ENCODE measurements at regions of chr6 and their contacts with region 1.

Region 1: GRCh38 chr6:122730775-122731386 is 48.6 kb upstream of the FABP7 start:
- DNase-seq: peak in 3 of 14 experiments; percentile 20 to 38 (median 30)
- ATAC-seq: no peak
- H3K4me3 ChIP-seq: no peak overlapping the region
- H3K4me3 Mint-ChIP-seq: no peak overlapping the region
- H3K27ac ChIP-seq: no peak overlapping the region
- H3K27ac Mint-ChIP-seq: no peak overlapping the region
- H3K4me1 ChIP-seq: no peaks in the 10 kb centered on the region
- H3K4me1 Mint-ChIP-seq: no peaks in the 10 kb centered on the region
- H3K27me3 ChIP-seq: no peaks in the 10 kb centered on the region
- H3K27me3 Mint-ChIP-seq: peaks cover 5% of the 10 kb centered on the region
- CTCF ChIP-seq: peak; percentile 63

Region 2: GRCh38 chr6:122839477-122839876 is 108.6 kb after region 1 on chr6:
- CTCF ChIA-PET with region 1: no interaction called
- POLR2A ChIA-PET with region 1: no interaction called
- intact Hi-C with region 1: loop called (anchors 1 to 2 kb)
- DNase-seq: peak in 12 of 14 experiments; percentile 1 to 63 (median 16)
- ATAC-seq: peak; percentile 60
- H3K4me3 ChIP-seq: no peak overlapping the region
- H3K4me3 Mint-ChIP-seq: no peak overlapping the region
- H3K27ac ChIP-seq: no peak overlapping the region
- H3K27ac Mint-ChIP-seq: no peak overlapping the region
- H3K4me1 ChIP-seq: no peaks in the 10 kb centered on the region
- H3K4me1 Mint-ChIP-seq: no peaks in the 10 kb centered on the region
- H3K27me3 ChIP-seq: no peaks in the 10 kb centered on the region
- H3K27me3 Mint-ChIP-seq: peaks cover 14% of the 10 kb centered on the region
- CTCF ChIP-seq: peak; percentile 39

Region 3: DNA sequence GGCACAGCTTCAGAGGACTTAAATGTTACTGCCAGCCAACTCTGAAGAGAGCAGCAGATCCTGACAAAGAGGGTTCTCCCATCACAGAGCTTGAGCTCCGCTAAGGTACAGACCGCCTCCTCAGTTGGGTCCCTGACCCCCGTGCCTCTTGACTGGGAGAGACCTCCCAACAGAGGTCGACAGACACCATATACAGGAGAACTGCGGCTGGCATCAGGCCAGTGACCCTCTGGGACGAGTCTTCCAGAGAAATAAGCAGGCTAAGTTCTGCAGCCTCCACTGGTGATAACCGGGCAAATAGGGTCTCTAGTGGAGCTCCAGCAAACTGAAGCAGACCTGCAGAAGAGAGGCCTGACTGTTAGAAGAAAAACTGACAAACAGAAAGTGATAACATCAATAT is 452.1 kb after region 1 on chr6:
- CTCF ChIA-PET with region 1: no interaction called
- POLR2A ChIA-PET with region 1: no interaction called
- intact Hi-C with region 1: no loop called
- DNase-seq: no peak
- ATAC-seq: no peak
- H3K4me3 ChIP-seq: no peak overlapping the region
- H3K4me3 Mint-ChIP-seq: no peak overlapping the region
- H3K27ac ChIP-seq: no peak overlapping the region
- H3K27ac Mint-ChIP-seq: no peak overlapping the region
- H3K4me1 ChIP-seq: no peaks in the 10 kb centered on the region
- H3K4me1 Mint-ChIP-seq: no peaks in the 10 kb centered on the region
- H3K27me3 ChIP-seq: no peaks in the 10 kb centered on the region
- H3K27me3 Mint-ChIP-seq: no peaks in the 10 kb centered on the region
- CTCF ChIP-seq: no peak

Region 4: DNA sequence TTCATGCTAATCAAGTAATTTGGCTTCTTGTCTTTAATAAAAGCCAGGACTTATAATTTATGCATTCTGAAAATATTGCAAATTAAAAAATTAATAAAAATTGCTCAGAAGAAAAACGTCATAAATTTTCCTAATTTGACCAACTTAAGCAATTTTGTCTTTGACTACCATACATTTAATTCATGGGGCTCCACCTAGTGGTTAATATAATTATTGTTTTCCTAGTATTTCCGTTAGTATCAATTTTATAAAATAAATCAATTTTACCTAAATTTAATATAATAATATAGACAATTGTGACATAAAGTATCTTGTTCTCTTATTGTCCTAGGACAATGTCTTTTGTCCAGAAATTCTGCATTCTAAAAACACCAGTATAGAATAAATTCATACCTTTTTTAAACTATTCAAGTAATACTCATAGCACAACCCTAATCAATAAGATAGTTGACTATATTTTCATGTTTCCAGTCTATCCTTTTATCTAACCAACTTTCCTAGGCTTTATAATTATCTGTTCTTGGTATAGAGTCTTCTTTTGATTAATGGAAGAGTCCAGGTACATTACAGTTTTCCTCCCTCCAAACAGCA is 585.9 kb after region 1 on chr6:
- CTCF ChIA-PET with region 1: no interaction called
- POLR2A ChIA-PET with region 1: no interaction called
- intact Hi-C with region 1: loop called (anchors 5 kb)
- DNase-seq: peak in 2 of 14 experiments; percentile 1 to 16
- ATAC-seq: no peak
- H3K4me3 ChIP-seq: no peak overlapping the region
- H3K4me3 Mint-ChIP-seq: no peak overlapping the region
- H3K27ac ChIP-seq: no peak overlapping the region
- H3K27ac Mint-ChIP-seq: no peak overlapping the region
- H3K4me1 ChIP-seq: no peaks in the 10 kb centered on the region
- H3K4me1 Mint-ChIP-seq: no peaks in the 10 kb centered on the region
- H3K27me3 ChIP-seq: no peaks in the 10 kb centered on the region
- H3K27me3 Mint-ChIP-seq: no peaks in the 10 kb centered on the region
- CTCF ChIP-seq: peak; percentile 67

Measured in CD4-positive, alpha-beta T cell (primary cell).